Activated T-helper 1 cell treated with anti-CD3 and anti-CD28 coated beads, Interleukin-12 subunit alpha, Interleukin-12 subunit beta, Interleukin-2, Interleukin-4 antibody, amounts not matched to agents 30 ng/mL and 10 ng/mL and 1 ng/mL, durations not matched to agents 14 hours and 24 hours and 36 hours (primary cell): ENCODE measurements at regions of chr17 and their contacts with region 1.

Region 1: GRCh38 chr17:1628856-1629646 is 417 bp upstream of the SLC43A2 start:
- DNase-seq: peak; percentile 80
- H3K4me3 Mint-ChIP-seq: peak overlapping the region; percentile 90
- H3K27ac Mint-ChIP-seq: peak overlapping the region; percentile 90
- H3K4me1 Mint-ChIP-seq: peaks cover 16% of the 10 kb centered on the region
- H3K27me3 Mint-ChIP-seq: peaks cover 38% of the 10 kb centered on the region

Region 2: GRCh38 chr17:1365445-1366039 is 263.5 kb before region 1 on chr17:
- intact Hi-C with region 1: loop called (anchors 5 kb)
- DNase-seq: peak; percentile 48
- H3K4me3 Mint-ChIP-seq: no peak overlapping the region
- H3K27ac Mint-ChIP-seq: no peak overlapping the region
- H3K4me1 Mint-ChIP-seq: peaks cover 47% of the 10 kb centered on the region
- H3K27me3 Mint-ChIP-seq: no peaks in the 10 kb centered on the region

Region 3: GRCh38 chr17:1561400-1562175 is 67.5 kb before region 1 on chr17:
- intact Hi-C with region 1: loop called (anchors 1 kb)
- DNase-seq: peak; percentile 27
- H3K4me3 Mint-ChIP-seq: peak overlapping the region; percentile 88
- H3K27ac Mint-ChIP-seq: peak overlapping the region; percentile 61
- H3K4me1 Mint-ChIP-seq: peaks cover 40% of the 10 kb centered on the region
- H3K27me3 Mint-ChIP-seq: peaks cover 11% of the 10 kb centered on the region

Region 4: GRCh38 chr17:1606352-1607033 is 22.6 kb before region 1 on chr17:
- intact Hi-C with region 1: loop called (anchors 1 kb)
- DNase-seq: no peak
- H3K4me3 Mint-ChIP-seq: no peak overlapping the region
- H3K27ac Mint-ChIP-seq: peak overlapping the region; percentile 84
- H3K4me1 Mint-ChIP-seq: peaks cover 20% of the 10 kb centered on the region
- H3K27me3 Mint-ChIP-seq: no peaks in the 10 kb centered on the region